ENCODE measurements at regions of chr2 and their contacts with region 1.

Region 1: GRCh38 chr2:148860037-148860436 is 15.0 kb upstream of the KIF5C start:
- DNase-seq: no peak
- H3K4me3 ChIP-seq: no peak overlapping the region
- H3K27ac ChIP-seq: no peak overlapping the region
- H3K4me1 ChIP-seq: no peaks in the 10 kb centered on the region
- H3K27me3 ChIP-seq: peaks cover 3% of the 10 kb centered on the region
- CTCF ChIP-seq: no peak

Region 2: GRCh38 chr2:148829618-148830017 is 30.4 kb before region 1 on chr2:
- CTCF ChIA-PET with region 1: no interaction called
- dilution Hi-C with region 1: no loop called
- in situ Hi-C with region 1: no loop called
- intact Hi-C with region 1: no loop called
- DNase-seq: no peak
- H3K4me3 ChIP-seq: no peak overlapping the region
- H3K27ac ChIP-seq: no peak overlapping the region
- H3K4me1 ChIP-seq: no peaks in the 10 kb centered on the region
- H3K27me3 ChIP-seq: no peaks in the 10 kb centered on the region
- CTCF ChIP-seq: no peak

Region 3: GRCh38 chr2:148926291-148926961 is 66.4 kb after region 1 on chr2:
- CTCF ChIA-PET with region 1: no interaction called
- dilution Hi-C with region 1: loop called (anchors 10 kb)
- in situ Hi-C with region 1: no loop called
- intact Hi-C with region 1: no loop called
- DNase-seq: no peak
- H3K4me3 ChIP-seq: no peak overlapping the region
- H3K27ac ChIP-seq: no peak overlapping the region
- H3K4me1 ChIP-seq: no peaks in the 10 kb centered on the region
- H3K27me3 ChIP-seq: no peaks in the 10 kb centered on the region
- CTCF ChIP-seq: peak; percentile 12 to 14